Activated naive CD4-positive, alpha-beta T cell treated with anti-CD3 and anti-CD28 coated beads for 36 hours (primary cell): ENCODE measurements at regions of chr11 and their contacts with region 1.

Region 1: GRCh38 chr11:34405079-34405858 is 33.5 kb upstream of the CAT start:
- DNase-seq: peak; percentile 28
- H3K4me3 Mint-ChIP-seq: no peak overlapping the region
- H3K27ac Mint-ChIP-seq: no peak overlapping the region
- H3K4me1 Mint-ChIP-seq: peaks cover 16% of the 10 kb centered on the region
- H3K27me3 Mint-ChIP-seq: peaks cover 9% of the 10 kb centered on the region

Region 2: DNA sequence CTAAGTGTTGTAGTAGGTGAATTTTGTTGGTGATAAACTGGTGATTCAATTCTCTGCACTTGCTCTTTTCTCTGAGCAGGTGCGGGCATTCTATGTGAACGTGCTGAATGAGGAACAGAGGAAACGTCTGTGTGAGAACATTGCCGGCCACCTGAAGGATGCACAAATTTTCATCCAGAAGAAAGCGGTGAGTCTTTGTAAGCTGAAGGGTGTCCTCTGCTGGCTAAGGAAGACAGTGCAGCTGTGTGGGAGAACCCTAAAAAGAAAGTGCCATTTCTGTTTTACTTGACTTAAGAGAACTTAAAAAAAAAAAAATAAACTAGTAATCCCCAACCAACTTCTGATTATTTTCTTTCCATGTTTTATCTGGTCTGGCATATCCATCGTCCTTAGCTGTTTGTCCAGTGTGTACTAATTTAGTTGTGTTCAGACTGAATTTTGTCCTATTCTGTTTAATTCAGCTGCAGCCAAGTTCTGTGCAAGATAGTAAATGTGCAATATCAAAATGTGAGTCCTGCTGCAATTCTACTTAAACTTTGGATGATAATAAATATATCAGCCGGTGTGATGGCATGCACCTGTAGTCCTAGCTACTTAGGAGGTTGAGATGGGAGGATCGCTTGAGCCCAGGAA is 63.1 kb after region 1 on chr11:
- CTCF ChIA-PET with region 1: interaction called, 8 read pairs
- intact Hi-C with region 1: loop called (anchors 2 kb)
- DNase-seq: peak; percentile 78
- H3K4me3 Mint-ChIP-seq: no peak overlapping the region
- H3K27ac Mint-ChIP-seq: no peak overlapping the region
- H3K4me1 Mint-ChIP-seq: no peaks in the 10 kb centered on the region
- H3K27me3 Mint-ChIP-seq: no peaks in the 10 kb centered on the region